Naive thymus-derived CD4-positive, alpha-beta T cell (primary cell): ENCODE measurements at regions of chr4 and their contacts with region 1.

Region 1: GRCh38 chr4:142405021-142405694 is 440.9 kb downstream of the INPP4B start:
- DNase-seq: peak; percentile 19 to 66 (median 60)
- ATAC-seq: peak; percentile 72
- H3K4me3 ChIP-seq: peak overlapping the region; percentile 95
- H3K4me3 Mint-ChIP-seq: peak overlapping the region; percentile 92 to 100 (median 99)
- H3K27ac ChIP-seq: peak overlapping the region; percentile 82
- H3K27ac Mint-ChIP-seq: peak overlapping the region; percentile 86 to 100 (median 96)
- H3K4me1 ChIP-seq: peaks cover 26 to 48% of the 10 kb centered on the region in 2 donors
- H3K4me1 Mint-ChIP-seq: peaks cover 22 to 80% (median 69%) of the 10 kb centered on the region in 7 donors
- H3K27me3 ChIP-seq: no peaks in the 10 kb centered on the region
- H3K27me3 Mint-ChIP-seq: no peaks in the 10 kb centered on the region

Region 2: DNA sequence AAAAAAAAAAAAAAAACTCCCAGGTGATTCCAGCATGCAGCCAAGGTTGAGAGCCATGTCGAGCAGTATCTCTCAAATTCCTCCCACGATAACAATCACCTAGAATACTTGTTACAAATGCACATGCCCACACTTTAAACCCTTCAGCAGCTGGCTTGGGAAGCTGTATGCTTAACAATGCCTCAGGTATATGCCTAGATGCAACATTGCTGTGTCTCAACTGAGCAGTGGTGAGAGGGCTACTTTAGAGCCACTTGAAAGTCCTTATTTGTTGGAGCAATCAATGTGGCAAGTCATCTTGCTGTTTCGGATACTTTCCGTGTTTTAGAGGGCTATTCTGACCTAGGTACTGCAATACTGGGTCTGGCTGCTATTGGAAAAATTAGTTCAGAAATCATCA is 46.5 kb before region 1 on chr4:
- CTCF ChIA-PET with region 1: interaction called, 29 read pairs
- POLR2A ChIA-PET with region 1: interaction called, 89 read pairs
- intact Hi-C with region 1: loop called (anchors 1 kb)
- DNase-seq: no peak
- ATAC-seq: no peak
- H3K4me3 ChIP-seq: no peak overlapping the region
- H3K4me3 Mint-ChIP-seq: peak overlapping the region in 6 of 10 donors; percentile 12 to 58 (median 46)
- H3K27ac ChIP-seq: peak overlapping the region; percentile 34
- H3K27ac Mint-ChIP-seq: peak overlapping the region; percentile 60 to 94 (median 81)
- H3K4me1 ChIP-seq: peaks cover 67 to 68% of the 10 kb centered on the region in 2 donors
- H3K4me1 Mint-ChIP-seq: peaks cover 51 to 96% (median 85%) of the 10 kb centered on the region in 7 donors
- H3K27me3 ChIP-seq: no peaks in the 10 kb centered on the region
- H3K27me3 Mint-ChIP-seq: no peaks in the 10 kb centered on the region

Region 3: DNA sequence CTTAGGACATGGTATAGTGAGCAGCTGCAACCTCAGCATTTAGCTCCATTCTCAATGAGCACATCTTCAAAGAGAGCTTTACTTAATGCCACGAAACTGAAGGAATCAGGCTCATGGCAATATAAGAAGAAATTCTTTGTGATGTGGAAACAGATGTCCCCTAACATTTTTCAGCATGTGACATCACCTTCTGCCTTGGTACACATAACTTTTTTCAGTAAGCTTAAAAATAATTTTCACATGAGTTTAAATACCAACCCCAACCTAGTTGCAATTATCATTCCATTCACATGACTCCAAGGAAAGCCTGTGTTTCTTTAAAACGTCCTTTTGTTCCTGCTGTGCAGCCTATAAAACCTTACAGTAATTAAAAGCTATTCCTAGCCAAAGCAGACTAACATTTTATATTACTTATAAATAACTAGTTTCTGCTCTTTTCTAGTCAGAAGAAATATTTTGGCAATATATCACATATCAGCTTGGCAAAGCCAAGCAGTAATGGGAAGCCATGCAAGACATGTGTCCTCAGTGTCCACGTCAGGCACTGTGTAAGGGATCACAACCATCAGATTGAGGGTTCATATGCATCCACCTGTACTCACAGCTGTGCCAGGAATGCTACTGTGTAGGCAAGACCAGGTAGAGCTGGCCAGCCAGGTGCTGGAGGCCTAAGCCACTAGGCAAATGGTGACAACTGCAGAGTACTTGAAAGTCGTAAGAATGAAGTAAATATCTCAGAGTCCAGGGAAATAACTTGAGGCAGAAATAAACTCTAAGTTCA is 25.7 kb before region 1 on chr4:
- CTCF ChIA-PET with region 1: interaction called, 6 read pairs
- POLR2A ChIA-PET with region 1: interaction called, 27 read pairs
- intact Hi-C with region 1: loop called in 1 of 2 experiments (anchors 1 kb)
- DNase-seq: no peak
- ATAC-seq: no peak
- H3K4me3 ChIP-seq: no peak overlapping the region
- H3K4me3 Mint-ChIP-seq: peak overlapping the region in 3 of 10 donors; percentile 28 to 72 (median 34)
- H3K27ac ChIP-seq: peak overlapping the region; percentile 53
- H3K27ac Mint-ChIP-seq: peak overlapping the region; percentile 8 to 85 (median 75)
- H3K4me1 ChIP-seq: peaks cover 41 to 64% of the 10 kb centered on the region in 2 donors
- H3K4me1 Mint-ChIP-seq: peaks cover 39 to 91% (median 87%) of the 10 kb centered on the region in 7 donors
- H3K27me3 ChIP-seq: no peaks in the 10 kb centered on the region
- H3K27me3 Mint-ChIP-seq: no peaks in the 10 kb centered on the region

Region 4: GRCh38 chr4:142447009-142447408 is 41.9 kb after region 1 on chr4:
- CTCF ChIA-PET with region 1: no interaction called
- POLR2A ChIA-PET with region 1: interaction called, 3 read pairs
- intact Hi-C with region 1: loop called in 1 of 2 experiments (anchors 5 kb)
- DNase-seq: peak in 1 of 9 donors; percentile 2
- ATAC-seq: peak; percentile 20
- H3K4me3 ChIP-seq: no peak overlapping the region
- H3K4me3 Mint-ChIP-seq: peak overlapping the region in 8 of 10 donors; percentile 16 to 78 (median 70)
- H3K27ac ChIP-seq: no peak overlapping the region
- H3K27ac Mint-ChIP-seq: peak overlapping the region in 7 of 9 donors; percentile 32 to 71 (median 56)
- H3K4me1 ChIP-seq: peaks cover 0 to 14% of the 10 kb centered on the region in 2 donors
- H3K4me1 Mint-ChIP-seq: peaks cover 10 to 50% (median 42%) of the 10 kb centered on the region in 7 donors
- H3K27me3 ChIP-seq: no peaks in the 10 kb centered on the region
- H3K27me3 Mint-ChIP-seq: no peaks in the 10 kb centered on the region

Region 5: DNA sequence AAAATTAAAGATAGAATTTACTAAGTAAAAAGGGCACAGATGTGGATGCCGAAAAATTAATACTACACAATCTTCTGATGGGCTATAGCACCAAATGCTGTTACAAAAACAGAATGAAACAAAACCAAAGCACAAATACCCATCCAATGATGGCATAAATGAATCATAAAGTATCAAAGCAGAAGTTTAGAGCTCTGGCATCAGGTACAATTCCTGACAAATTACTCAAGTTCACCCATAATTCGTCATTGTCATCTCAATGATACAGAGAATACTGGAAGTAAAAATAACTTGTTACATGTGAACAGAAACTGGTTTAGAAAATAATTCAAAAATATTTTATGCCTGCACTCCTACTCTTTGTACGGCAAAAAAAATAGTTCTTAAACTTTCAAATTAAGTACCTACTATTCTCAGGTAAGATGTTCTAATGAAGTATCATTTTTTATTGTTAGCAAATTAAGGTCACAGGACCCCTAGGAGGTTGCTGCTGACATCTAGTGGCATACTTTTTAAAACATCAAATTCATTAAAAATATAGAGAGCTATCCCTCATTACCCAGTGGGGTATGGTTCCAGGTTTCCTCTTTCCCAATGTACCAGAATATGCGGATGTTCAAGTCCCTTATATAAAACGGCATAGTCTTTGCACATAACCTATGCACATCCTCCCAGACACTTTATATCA is 314.8 kb after region 1 on chr4:
- CTCF ChIA-PET with region 1: interaction called, 4 read pairs
- POLR2A ChIA-PET with region 1: interaction called, 3 read pairs
- intact Hi-C with region 1: loop called (anchors 1 to 2 kb)
- DNase-seq: peak in 6 of 9 donors; percentile 22 to 64 (median 58)
- ATAC-seq: peak; percentile 75
- H3K4me3 ChIP-seq: no peak overlapping the region
- H3K4me3 Mint-ChIP-seq: peak overlapping the region in 6 of 10 donors; percentile 16 to 51 (median 37)
- H3K27ac ChIP-seq: peak overlapping the region; percentile 43
- H3K27ac Mint-ChIP-seq: peak overlapping the region in 6 of 9 donors; percentile 43 to 91 (median 68)
- H3K4me1 ChIP-seq: peaks cover 0 to 10% of the 10 kb centered on the region in 2 donors
- H3K4me1 Mint-ChIP-seq: peaks cover 3 to 49% (median 30%) of the 10 kb centered on the region in 7 donors
- H3K27me3 ChIP-seq: no peaks in the 10 kb centered on the region
- H3K27me3 Mint-ChIP-seq: no peaks in the 10 kb centered on the region

Region 6: DNA sequence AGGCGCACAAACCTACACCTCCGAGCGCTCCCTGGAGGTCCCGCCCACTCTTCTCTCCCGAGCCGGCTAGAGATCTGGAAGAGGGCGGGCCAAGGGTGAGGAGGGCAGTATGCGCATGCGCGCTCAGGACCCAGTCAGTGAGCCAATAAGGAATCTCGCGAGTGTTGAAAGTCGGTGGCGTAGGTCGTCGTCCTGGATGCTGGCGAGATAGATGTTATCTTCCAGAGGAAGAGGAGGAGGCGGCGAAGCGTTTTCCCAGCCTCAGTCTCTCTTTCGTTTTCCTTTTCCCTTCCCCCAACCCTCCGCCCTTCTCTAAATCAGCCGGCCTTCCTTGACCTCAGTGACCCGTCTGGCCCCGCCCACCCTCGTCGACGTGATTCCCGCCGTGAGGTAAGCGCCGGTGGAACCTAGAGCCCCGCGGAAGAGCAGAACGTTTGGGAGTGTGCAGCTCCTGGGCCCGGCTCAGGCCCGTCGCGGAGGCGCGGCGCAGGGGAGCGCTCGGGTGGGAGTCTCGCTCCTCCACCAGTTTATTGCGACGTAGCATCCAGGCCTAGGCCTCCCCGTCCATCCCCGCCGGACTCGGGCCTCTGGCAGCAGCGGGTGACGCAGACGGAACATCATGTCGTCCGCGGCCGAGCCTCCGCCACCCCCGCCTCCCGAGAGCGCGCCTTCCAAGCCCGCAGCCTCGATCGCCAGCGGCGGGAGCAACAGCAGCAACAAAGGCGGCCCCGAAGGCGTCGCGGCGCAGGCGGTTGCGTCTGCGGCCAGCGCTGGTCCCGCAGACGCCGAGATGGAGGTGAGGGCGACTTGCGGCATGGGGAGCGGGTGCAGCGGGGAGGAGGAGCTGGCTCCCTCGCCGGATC is 1108.4 kb after region 1 on chr4 and contains the start of gene SMARCA5:
- CTCF ChIA-PET with region 1: no interaction called
- POLR2A ChIA-PET with region 1: no interaction called
- intact Hi-C with region 1: loop called in 1 of 2 experiments (anchors 10 kb)
- DNase-seq: peak; percentile 93 to 99 (median 98)
- ATAC-seq: peak; percentile 92
- H3K4me3 ChIP-seq: peak within 1 kb of the TSS; percentile 91
- H3K4me3 Mint-ChIP-seq: peak within 1 kb of the TSS; percentile 93 to 100 (median 98)
- H3K27ac ChIP-seq: peak within 1 kb of the TSS; percentile 98
- H3K27ac Mint-ChIP-seq: peak within 1 kb of the TSS; percentile 97 to 100 (median 100)
- H3K4me1 ChIP-seq: peaks cover 20 to 36% of the 10 kb centered on the region in 2 donors
- H3K4me1 Mint-ChIP-seq: peaks cover 22 to 54% (median 37%) of the 10 kb centered on the region in 7 donors
- H3K27me3 ChIP-seq: no peaks in the 10 kb centered on the region
- H3K27me3 Mint-ChIP-seq: peaks cover 0 to 30% (median 0%) of the 10 kb centered on the region in 5 donors
- total RNA-seq, gene SMARCA5: 48.3 to 58.2 (median 54.4) TPM